ENCODE measurements at regions of chr5 and their contacts with region 1.

Region 1: GRCh38 chr5:170623576-170624181 is 119.9 kb downstream of the KCNIP1 start:
- DNase-seq: peak; percentile 58
- H3K4me3 Mint-ChIP-seq: no peak overlapping the region
- H3K27ac Mint-ChIP-seq: no peak overlapping the region
- H3K4me1 Mint-ChIP-seq: no peaks in the 10 kb centered on the region
- H3K27me3 Mint-ChIP-seq: no peaks in the 10 kb centered on the region

Region 2: DNA sequence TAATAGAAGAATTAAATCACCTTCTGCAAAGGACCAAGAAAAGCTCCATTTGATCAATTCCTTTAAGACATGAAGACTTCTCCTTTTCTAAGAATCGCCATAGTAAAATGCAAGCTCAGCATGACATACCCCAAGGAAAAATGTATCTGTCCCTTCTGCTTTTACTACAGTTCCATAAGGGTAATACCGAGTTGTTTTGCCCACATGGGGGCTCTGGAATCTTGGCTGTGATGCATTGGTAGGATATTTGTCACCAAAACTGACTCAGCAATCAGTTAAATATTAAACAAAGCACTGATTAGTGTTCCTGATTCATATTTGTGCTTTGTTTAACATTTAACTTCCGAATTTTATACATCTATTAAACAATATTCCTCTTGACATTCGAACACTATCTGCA is 144.2 kb before region 1 on chr5:
- CTCF ChIA-PET with region 1: no interaction called
- intact Hi-C with region 1: no loop called
- DNase-seq: no peak
- H3K4me3 Mint-ChIP-seq: no peak overlapping the region
- H3K27ac Mint-ChIP-seq: no peak overlapping the region
- H3K4me1 Mint-ChIP-seq: no peaks in the 10 kb centered on the region
- H3K27me3 Mint-ChIP-seq: peaks cover 18% of the 10 kb centered on the region

Region 3: DNA sequence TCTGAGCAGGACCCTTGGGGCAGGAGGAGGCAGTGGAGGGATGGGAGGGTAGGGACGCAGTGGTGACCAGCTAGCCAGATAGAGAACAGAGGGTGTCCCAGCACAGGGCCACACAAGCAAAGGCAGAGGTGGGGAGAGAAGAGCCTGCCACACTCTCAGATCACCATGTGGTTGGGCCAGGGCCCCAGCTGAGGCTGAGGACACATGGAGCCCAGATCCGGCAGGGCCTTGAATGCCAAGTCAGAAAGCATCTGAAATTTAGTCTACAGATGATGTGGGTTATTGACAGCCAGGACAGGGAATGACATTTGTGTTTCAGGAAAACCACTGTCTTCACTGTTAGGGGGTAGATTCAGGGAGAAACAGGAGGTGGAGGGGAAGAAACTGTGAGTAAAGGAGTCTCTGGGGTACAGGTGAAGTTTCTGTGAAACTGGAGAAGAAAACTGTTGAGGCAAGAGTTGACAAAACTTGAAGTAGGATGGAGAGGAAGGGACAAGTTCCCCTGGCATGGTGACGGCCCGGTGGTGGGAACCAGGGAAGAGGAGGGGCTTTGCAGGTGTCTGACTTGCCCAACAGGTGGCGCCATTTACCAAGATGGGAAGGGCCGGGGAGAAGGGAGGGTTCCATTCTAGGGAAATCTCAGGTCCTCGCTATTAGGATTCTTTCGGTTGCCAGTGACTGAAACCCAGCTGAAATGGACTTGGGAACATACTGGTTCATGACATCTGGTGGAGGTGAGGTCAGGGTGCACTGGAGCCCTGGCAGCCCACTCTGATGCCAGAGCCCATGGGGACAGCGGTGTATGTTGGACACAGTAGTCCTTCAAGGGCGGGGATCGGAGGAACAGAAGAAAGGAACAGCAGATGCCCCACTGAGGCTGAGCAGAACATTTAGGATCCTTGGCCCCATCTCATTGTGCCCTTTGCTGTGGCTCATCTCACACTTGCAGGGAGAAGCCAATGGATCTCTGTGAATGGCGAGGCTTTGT is 19.8 kb before region 1 on chr5:
- CTCF ChIA-PET with region 1: interaction called, 4 read pairs
- intact Hi-C with region 1: loop called (anchors 1 kb)
- DNase-seq: peak; percentile 76
- H3K4me3 Mint-ChIP-seq: no peak overlapping the region
- H3K27ac Mint-ChIP-seq: no peak overlapping the region
- H3K4me1 Mint-ChIP-seq: peaks cover under 1% of the 10 kb centered on the region
- H3K27me3 Mint-ChIP-seq: peaks cover 25% of the 10 kb centered on the region

Region 4: GRCh38 chr5:171092194-171092593 is 468.5 kb after region 1 on chr5:
- CTCF ChIA-PET with region 1: no interaction called
- intact Hi-C with region 1: no loop called
- DNase-seq: no peak
- H3K4me3 Mint-ChIP-seq: no peak overlapping the region
- H3K27ac Mint-ChIP-seq: no peak overlapping the region
- H3K4me1 Mint-ChIP-seq: no peaks in the 10 kb centered on the region
- H3K27me3 Mint-ChIP-seq: no peaks in the 10 kb centered on the region

Measured in activated naive CD4-positive, alpha-beta T cell treated with anti-CD3 and anti-CD28 coated beads for 36 hours (primary cell).